B cell (primary cell): ENCODE measurements at regions of chr17 and their contacts with region 1.

Region 1: GRCh38 chr17:8091033-8091687 is 3.6 kb upstream of the ALOX12B start:
- DNase-seq: peak; percentile 90
- ATAC-seq: peak; percentile 90
- H3K4me3 ChIP-seq: peak overlapping the region in 3 of 5 experiments; percentile 4 to 47 (median 29)
- H3K4me3 Mint-ChIP-seq: peak overlapping the region; percentile 78
- H3K27ac ChIP-seq: peak overlapping the region in 1 of 2 donors; percentile 55
- H3K27ac Mint-ChIP-seq: peak overlapping the region; percentile 92
- H3K4me1 ChIP-seq: peaks cover 26 to 43% of the 10 kb centered on the region in 2 donors
- H3K4me1 Mint-ChIP-seq: peaks cover 35% of the 10 kb centered on the region
- H3K27me3 ChIP-seq: no peaks in the 10 kb centered on the region
- H3K27me3 Mint-ChIP-seq: peaks cover 12% of the 10 kb centered on the region
- CTCF ChIP-seq: no peak

Region 2: DNA sequence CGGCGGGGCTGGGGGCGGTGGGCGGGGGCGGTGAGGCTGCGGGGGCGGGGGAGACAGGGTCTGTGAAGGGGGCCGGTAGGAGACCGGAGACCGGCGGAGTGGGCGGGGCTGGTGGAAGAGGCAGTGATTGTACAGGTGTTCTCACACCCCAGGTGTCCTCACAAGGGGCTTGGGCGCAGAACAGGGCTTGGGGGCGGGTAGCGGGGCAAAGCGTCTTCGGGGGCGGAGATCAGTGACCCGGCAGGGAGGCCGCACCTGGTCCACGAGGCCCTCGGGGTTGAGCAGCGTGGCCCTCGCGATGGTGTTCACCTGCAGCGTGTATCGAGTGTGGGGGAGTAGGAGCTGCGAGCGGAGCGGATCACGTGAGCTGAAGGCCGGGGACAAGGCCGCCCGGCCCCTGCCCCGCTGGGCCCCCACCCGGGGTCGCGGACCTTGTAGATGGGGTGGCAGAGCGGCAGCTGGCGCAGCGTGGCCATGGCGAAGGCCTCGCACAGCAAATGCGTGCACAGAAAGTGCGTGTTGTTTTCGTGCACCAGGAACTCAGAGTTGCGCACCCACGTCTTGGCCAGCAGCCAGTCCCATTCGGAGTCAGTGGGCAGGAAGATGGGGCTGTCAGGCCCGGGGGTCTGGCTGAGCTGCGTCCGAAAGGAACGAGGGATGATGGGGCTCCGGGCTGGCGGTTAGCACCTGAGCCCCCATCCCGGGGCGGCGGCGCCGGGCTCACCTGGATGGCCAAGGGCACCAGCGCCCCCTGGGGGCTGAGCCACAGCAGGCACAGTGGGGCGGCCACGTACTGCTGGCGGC is 18.7 kb after region 1 on chr17:
- CTCF ChIA-PET with region 1: interaction called, 109 read pairs
- POLR2A ChIA-PET with region 1: no interaction called
- intact Hi-C with region 1: loop called (anchors 1 kb)
- DNase-seq: peak; percentile 87
- ATAC-seq: peak; percentile 92
- H3K4me3 ChIP-seq: peak overlapping the region in 4 of 5 experiments; percentile 37 to 56 (median 52)
- H3K4me3 Mint-ChIP-seq: peak overlapping the region; percentile 68
- H3K27ac ChIP-seq: no peak overlapping the region
- H3K27ac Mint-ChIP-seq: peak overlapping the region; percentile 53
- H3K4me1 ChIP-seq: peaks cover 10 to 11% of the 10 kb centered on the region in 2 donors
- H3K4me1 Mint-ChIP-seq: peaks cover 10% of the 10 kb centered on the region
- H3K27me3 ChIP-seq: peaks cover 0 to 52% (median 32%) of the 10 kb centered on the region in 4 experiments
- H3K27me3 Mint-ChIP-seq: peaks cover 36% of the 10 kb centered on the region
- CTCF ChIP-seq: peak; percentile 93

Region 3: GRCh38 chr17:8166731-8167130 is 75.6 kb after region 1 on chr17:
- CTCF ChIA-PET with region 1: no interaction called
- POLR2A ChIA-PET with region 1: no interaction called
- intact Hi-C with region 1: no loop called
- DNase-seq: no peak
- ATAC-seq: no peak
- H3K4me3 ChIP-seq: no peak overlapping the region
- H3K4me3 Mint-ChIP-seq: no peak overlapping the region
- H3K27ac ChIP-seq: no peak overlapping the region
- H3K27ac Mint-ChIP-seq: no peak overlapping the region
- H3K4me1 ChIP-seq: peaks cover 21 to 27% of the 10 kb centered on the region in 2 donors
- H3K4me1 Mint-ChIP-seq: peaks cover 25% of the 10 kb centered on the region
- H3K27me3 ChIP-seq: no peaks in the 10 kb centered on the region
- H3K27me3 Mint-ChIP-seq: no peaks in the 10 kb centered on the region
- CTCF ChIP-seq: no peak

Region 4: DNA sequence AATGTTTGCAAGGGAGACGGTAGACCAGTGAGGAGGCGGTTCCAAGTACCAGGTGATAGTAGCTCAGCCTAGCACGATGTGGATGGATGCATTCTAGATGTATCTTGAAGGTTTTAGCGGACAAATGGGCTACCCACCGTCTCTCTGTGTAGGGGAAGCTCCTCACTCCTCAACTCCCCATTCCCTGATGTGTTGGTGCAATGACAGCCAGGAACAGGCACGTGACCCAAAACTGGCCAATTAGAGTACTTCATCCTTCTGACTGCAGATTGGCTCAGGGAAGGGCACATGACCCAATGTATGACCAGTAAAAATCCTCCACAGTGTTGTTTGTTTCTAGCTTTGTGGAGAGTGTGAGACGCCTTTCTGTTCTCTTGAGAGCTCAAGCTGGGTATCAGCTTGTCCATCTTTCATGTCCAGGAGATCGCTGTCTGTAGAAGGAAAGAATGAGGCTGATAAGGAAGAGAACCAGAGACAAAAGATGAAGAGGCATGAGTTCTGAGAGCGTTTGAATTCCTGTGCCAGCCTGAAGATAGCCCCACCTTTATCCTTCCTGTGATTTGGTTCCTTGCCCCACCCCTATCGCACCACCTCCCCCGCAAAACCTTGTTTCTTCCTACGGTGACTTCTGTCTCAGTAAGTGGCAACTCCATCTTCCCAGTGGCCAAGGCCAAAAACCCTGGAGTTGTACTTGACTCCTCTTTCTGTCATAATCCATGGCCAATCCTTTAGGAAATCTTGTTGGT is 101.1 kb after region 1 on chr17:
- CTCF ChIA-PET with region 1: no interaction called
- POLR2A ChIA-PET with region 1: no interaction called
- intact Hi-C with region 1: no loop called
- DNase-seq: peak; percentile 74
- ATAC-seq: peak; percentile 6
- H3K4me3 ChIP-seq: peak overlapping the region; percentile 22 to 52 (median 45)
- H3K4me3 Mint-ChIP-seq: no peak overlapping the region
- H3K27ac ChIP-seq: peak overlapping the region; percentile 61 to 68
- H3K27ac Mint-ChIP-seq: no peak overlapping the region
- H3K4me1 ChIP-seq: peaks cover 36 to 53% of the 10 kb centered on the region in 2 donors
- H3K4me1 Mint-ChIP-seq: peaks cover 16% of the 10 kb centered on the region
- H3K27me3 ChIP-seq: no peaks in the 10 kb centered on the region
- H3K27me3 Mint-ChIP-seq: no peaks in the 10 kb centered on the region
- CTCF ChIP-seq: no peak